Activated T-helper 2 cell treated with anti-CD3 and anti-CD28 coated beads, Interferon-gamma antibody, Interleukin-2, Interleukin-4, amounts not matched to agents 10 μg/mL and 5 μg/mL and 100 μg/mL, durations not matched to agents 14 hours and 24 hours and 36 hours (primary cell): ENCODE measurements at regions of chr22 and their contacts with region 1.

Region 1: GRCh38 chr22:37745548-37746365 is 48.9 kb downstream of the TRIOBP start:
- DNase-seq: peak; percentile 84
- H3K4me3 Mint-ChIP-seq: peak overlapping the region; percentile 90
- H3K27ac Mint-ChIP-seq: peak overlapping the region; percentile 80
- H3K4me1 Mint-ChIP-seq: peaks cover 26% of the 10 kb centered on the region
- H3K27me3 Mint-ChIP-seq: no peaks in the 10 kb centered on the region

Region 2: DNA sequence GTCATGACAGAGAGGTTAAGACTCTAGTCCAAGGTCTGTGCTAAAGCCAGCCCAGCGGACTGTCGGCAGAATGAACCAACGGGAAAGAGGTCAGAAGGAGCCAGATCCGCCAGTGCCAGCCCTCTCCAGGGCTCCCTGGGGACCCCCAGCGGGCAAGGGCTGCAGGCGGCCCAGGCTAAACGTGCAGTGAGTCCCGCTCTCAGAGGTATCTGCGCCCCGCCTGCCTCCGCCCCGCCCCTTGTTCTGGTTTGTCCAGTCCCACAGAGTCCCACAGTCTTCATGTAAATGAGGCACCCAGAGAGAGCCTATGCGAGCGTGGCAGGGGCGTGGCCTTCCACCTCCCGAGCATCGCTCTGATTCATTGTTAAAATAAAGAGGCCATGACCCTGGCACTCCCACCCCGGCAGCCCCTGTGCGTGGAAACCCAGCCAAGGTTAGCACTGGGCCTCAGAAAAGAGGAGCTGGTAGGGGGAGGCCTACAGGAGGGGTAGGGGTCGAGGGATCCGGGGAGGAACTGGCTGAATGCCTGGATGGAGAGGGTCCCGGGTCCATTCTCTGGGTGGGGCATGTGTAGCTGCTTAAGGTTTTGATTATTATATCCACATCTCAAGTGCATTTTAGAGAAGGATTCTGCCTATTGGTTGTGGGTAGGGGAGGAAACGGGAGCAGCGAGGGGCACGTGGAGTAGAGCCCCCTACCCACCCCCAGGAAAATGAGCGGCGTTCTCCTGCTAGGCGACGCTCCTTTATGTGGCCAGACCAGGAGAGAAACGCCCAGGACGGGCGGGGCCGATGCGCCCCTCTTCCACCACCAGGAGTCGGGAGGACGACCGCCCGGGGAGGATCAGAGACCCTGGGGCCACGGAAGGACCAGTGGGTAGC is 48.9 kb before region 1 on chr22 and contains the start of gene TRIOBP:
- intact Hi-C with region 1: loop called (anchors 5 kb)
- DNase-seq: peak; percentile 91
- H3K4me3 Mint-ChIP-seq: peak within 1 kb of the TSS; percentile 81
- H3K27ac Mint-ChIP-seq: peak within 1 kb of the TSS; percentile 44
- H3K4me1 Mint-ChIP-seq: peaks cover 11% of the 10 kb centered on the region
- H3K27me3 Mint-ChIP-seq: no peaks in the 10 kb centered on the region
- total RNA-seq, gene TRIOBP: 37.2 and 43.3 TPM in 2 replicates